Activated T-helper 2 cell treated with anti-CD3 and anti-CD28 coated beads, Interferon-gamma antibody, Interleukin-2, Interleukin-4, amounts not matched to agents 10 μg/mL and 5 μg/mL and 100 μg/mL, durations not matched to agents 14 hours and 24 hours and 36 hours (primary cell): ENCODE measurements at regions of chr6 and their contacts with region 1.

Region 1: DNA sequence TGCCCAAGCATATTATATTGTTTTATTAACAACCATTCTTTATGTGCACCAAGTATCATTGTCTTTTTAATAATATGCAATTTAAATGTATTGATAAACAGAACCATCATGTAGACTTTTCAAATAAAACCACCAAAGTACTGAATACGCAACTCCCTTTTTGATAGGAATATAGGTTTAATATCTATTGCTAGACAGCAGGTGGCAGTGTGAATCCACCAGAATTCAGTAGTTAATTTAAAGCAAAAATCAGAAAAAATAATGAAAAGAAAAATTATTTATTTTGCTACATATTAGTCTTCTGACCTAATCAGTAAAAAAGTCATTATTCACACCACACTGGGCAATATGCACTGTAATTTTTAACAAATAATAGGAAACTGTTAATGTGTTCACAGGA is 143.7 kb downstream of the KLHL32 start:
- DNase-seq: no peak
- H3K4me3 Mint-ChIP-seq: no peak overlapping the region
- H3K27ac Mint-ChIP-seq: no peak overlapping the region
- H3K4me1 Mint-ChIP-seq: peaks cover 10% of the 10 kb centered on the region
- H3K27me3 Mint-ChIP-seq: no peaks in the 10 kb centered on the region

Region 2: DNA sequence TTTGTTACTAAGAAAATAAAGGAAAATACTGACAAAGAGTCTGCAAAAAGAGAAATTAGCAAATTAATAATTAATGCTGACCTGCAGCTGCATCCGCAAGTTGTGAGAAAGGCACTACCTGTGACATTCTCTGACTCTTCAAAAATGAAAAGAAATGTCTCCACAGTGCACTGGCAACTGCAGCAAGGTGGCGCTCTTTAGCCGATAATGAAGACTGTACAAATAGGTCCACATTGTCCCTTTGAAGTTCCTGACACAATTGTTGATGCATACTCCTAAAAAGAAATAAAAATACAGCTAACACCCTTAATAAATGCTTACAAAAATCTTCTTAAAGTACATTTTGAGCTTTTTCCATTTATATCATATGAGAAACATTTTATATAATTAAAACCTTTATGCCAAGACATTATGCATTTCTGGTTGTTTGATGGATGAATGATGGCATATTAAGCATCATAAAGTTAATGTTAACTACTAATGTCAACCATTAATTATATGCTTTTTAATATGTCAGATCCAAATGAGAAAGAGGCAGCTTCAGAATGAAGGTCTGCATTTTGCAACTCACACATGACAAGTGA is 118.3 kb after region 1 on chr6:
- intact Hi-C with region 1: loop called (anchors 5 kb)
- DNase-seq: peak; percentile 41
- H3K4me3 Mint-ChIP-seq: no peak overlapping the region
- H3K27ac Mint-ChIP-seq: no peak overlapping the region
- H3K4me1 Mint-ChIP-seq: peaks cover 3% of the 10 kb centered on the region
- H3K27me3 Mint-ChIP-seq: no peaks in the 10 kb centered on the region

Region 3: GRCh38 chr6:97401533-97401932 is 333.3 kb after region 1 on chr6:
- intact Hi-C with region 1: no loop called
- DNase-seq: no peak
- H3K4me3 Mint-ChIP-seq: no peak overlapping the region
- H3K27ac Mint-ChIP-seq: no peak overlapping the region
- H3K4me1 Mint-ChIP-seq: no peaks in the 10 kb centered on the region
- H3K27me3 Mint-ChIP-seq: peaks cover 9% of the 10 kb centered on the region